Activated CD4-positive, alpha-beta memory T cell treated with anti-CD3 and anti-CD28 coated beads, Interleukin-2, amount 10 ng/mL, durations not matched to agents 7 days and 5 days (primary cell): ENCODE measurements at regions of chr11 and their contacts with region 1.

Region 1: GRCh38 chr11:47980245-47981049 is at the start of gene PTPRJ:
- DNase-seq: peak; percentile 60
- H3K4me3 Mint-ChIP-seq: peak within 1 kb of the TSS; percentile 99
- H3K27ac Mint-ChIP-seq: peak within 1 kb of the TSS; percentile 94
- H3K4me1 Mint-ChIP-seq: peaks cover 27% of the 10 kb centered on the region
- H3K27me3 Mint-ChIP-seq: peaks cover 15% of the 10 kb centered on the region
- total RNA-seq, gene PTPRJ: 83.0 to 89.1 TPM

Region 2: GRCh38 chr11:47800759-47801158 is 179.7 kb before region 1 on chr11:
- CTCF ChIA-PET with region 1: no interaction called
- POLR2A ChIA-PET with region 1: no interaction called
- DNase-seq: no peak
- H3K4me3 Mint-ChIP-seq: no peak overlapping the region
- H3K27ac Mint-ChIP-seq: peak overlapping the region; percentile 14
- H3K4me1 Mint-ChIP-seq: peaks cover 10% of the 10 kb centered on the region
- H3K27me3 Mint-ChIP-seq: no peaks in the 10 kb centered on the region

Region 3: GRCh38 chr11:47932544-47932943 is 47.9 kb before region 1 on chr11:
- CTCF ChIA-PET with region 1: interaction called, 13 read pairs
- POLR2A ChIA-PET with region 1: interaction called, 3 read pairs
- DNase-seq: no peak
- H3K4me3 Mint-ChIP-seq: no peak overlapping the region
- H3K27ac Mint-ChIP-seq: no peak overlapping the region
- H3K4me1 Mint-ChIP-seq: peaks cover 29% of the 10 kb centered on the region
- H3K27me3 Mint-ChIP-seq: no peaks in the 10 kb centered on the region

Region 4: GRCh38 chr11:47961383-47961782 is 19.1 kb before region 1 on chr11:
- CTCF ChIA-PET with region 1: no interaction called
- POLR2A ChIA-PET with region 1: no interaction called
- DNase-seq: no peak
- H3K4me3 Mint-ChIP-seq: no peak overlapping the region
- H3K27ac Mint-ChIP-seq: no peak overlapping the region
- H3K4me1 Mint-ChIP-seq: peaks cover 3% of the 10 kb centered on the region
- H3K27me3 Mint-ChIP-seq: no peaks in the 10 kb centered on the region

Region 5: DNA sequence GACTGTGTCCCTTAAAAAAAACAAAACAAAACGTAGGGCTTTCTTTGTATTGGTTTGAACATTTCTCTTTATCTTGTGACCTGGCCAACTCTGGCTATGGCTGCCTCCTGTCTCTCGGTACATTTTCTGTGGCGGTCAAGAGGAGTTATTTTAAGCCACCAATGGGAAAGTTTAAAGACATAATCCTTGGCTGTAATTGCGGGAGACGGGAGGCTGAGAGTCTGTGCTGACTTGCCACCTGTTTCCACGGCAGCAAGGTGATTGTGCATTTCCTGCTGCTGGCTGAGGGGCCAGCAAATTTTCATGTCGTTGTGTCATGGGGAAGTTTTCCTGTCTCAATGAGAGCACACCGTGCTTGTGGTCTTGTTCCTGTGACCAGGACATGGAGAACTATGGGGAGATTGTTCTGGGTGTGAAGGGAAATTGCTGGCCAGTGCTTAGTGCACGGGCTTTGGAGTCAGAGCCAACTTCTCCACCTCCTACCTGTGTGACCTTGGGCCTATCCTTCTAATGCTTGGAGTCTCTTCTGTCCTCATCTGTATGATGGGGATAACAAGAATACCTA is 10.9 kb after region 1 on chr11:
- CTCF ChIA-PET with region 1: interaction called, 10 read pairs
- POLR2A ChIA-PET with region 1: interaction called, 29 read pairs
- DNase-seq: no peak
- H3K4me3 Mint-ChIP-seq: peak overlapping the region; percentile 7
- H3K27ac Mint-ChIP-seq: peak overlapping the region; percentile 75
- H3K4me1 Mint-ChIP-seq: peaks cover 58% of the 10 kb centered on the region
- H3K27me3 Mint-ChIP-seq: no peaks in the 10 kb centered on the region

Region 6: GRCh38 chr11:48013269-48013901 is 32.9 kb after region 1 on chr11:
- CTCF ChIA-PET with region 1: interaction called, 10 read pairs
- POLR2A ChIA-PET with region 1: interaction called, 47 read pairs
- DNase-seq: peak; percentile 83
- H3K4me3 Mint-ChIP-seq: peak overlapping the region; percentile 69
- H3K27ac Mint-ChIP-seq: peak overlapping the region; percentile 99
- H3K4me1 Mint-ChIP-seq: peaks cover 91% of the 10 kb centered on the region
- H3K27me3 Mint-ChIP-seq: no peaks in the 10 kb centered on the region

Region 7: DNA sequence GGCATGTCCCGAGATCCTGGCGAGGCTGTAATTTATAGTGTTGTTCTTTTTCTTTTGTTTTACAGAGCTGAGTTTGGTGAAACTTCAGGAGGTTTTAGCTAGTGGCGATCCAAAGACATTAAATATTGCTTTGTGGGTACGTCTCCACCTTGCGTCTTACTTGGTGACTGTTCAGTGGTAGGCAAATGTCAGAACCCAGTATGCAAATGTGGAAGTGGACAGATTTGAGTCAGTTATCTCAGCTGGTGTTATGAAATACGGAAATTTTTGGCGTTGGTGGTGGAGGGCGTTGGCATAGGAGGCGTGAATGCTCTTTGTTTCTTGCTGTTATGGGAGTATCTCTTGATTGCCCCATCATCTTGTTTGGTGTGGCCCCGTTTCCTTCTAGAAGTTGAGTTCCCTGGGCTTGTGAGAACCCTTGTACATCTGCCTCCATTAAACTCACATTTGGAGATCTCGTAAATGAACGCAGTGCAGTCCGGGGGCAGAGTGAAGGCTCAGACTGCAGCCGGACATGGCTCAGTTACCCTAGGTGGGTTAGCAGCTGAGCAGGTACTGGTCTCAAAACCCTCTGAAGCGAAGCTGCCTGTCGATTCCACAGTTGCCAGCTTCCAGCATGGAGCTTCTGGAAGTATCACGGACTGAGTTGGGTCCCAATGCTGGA is 39.8 kb after region 1 on chr11:
- CTCF ChIA-PET with region 1: interaction called, 6 read pairs
- POLR2A ChIA-PET with region 1: interaction called, 38 read pairs
- DNase-seq: peak; percentile 72
- H3K4me3 Mint-ChIP-seq: peak overlapping the region; percentile 62
- H3K27ac Mint-ChIP-seq: peak overlapping the region; percentile 92
- H3K4me1 Mint-ChIP-seq: peaks cover 85% of the 10 kb centered on the region
- H3K27me3 Mint-ChIP-seq: no peaks in the 10 kb centered on the region

Region 8: DNA sequence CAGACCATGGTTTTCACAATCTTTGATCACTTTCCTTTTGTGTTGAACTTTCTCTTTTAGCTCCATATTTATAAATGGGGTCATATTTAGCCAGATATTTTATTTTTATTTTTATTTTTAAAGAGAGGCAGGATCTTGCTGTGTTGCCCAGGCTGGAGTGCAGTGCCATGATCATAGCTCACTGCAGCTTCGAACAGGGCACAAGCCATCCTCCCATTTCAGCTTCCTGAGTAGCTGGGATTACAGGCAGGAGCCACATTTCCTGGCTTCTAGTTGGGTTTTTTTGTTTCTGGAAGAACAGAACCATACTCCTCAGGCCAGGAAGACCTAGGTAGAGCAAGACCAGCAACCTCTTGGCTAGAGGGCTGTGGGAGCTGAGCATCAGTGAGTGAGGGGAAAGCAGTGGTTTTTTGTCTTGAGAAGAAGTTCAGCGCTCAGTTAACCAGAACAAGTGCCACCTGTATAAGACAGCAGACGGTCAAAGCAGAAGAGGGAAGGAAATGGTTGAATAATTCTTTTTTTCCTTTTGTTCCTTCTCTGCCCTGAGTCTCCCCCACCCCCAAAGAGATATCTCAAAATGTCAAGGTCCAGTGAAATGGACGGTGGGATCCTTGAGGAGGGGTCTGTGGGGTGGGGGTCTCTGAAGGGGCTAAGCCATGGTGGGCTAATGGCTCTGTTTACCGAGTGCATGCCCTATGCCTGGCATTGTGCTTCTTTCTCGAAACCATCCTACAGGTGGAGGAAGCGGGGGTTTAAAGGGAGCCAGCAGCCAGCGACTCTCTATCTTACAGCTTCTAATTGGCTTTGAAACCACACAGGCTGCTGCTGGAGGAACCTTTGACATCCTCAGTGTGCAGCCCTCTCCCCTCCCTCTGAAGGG is 62.9 kb after region 1 on chr11:
- CTCF ChIA-PET with region 1: no interaction called
- POLR2A ChIA-PET with region 1: no interaction called
- DNase-seq: no peak
- H3K4me3 Mint-ChIP-seq: no peak overlapping the region
- H3K27ac Mint-ChIP-seq: no peak overlapping the region
- H3K4me1 Mint-ChIP-seq: peaks cover 64% of the 10 kb centered on the region
- H3K27me3 Mint-ChIP-seq: no peaks in the 10 kb centered on the region

Region 9: GRCh38 chr11:48109046-48109666 is 128.7 kb after region 1 on chr11:
- CTCF ChIA-PET with region 1: interaction called, 15 read pairs
- POLR2A ChIA-PET with region 1: interaction called, 8 read pairs
- DNase-seq: no peak
- H3K4me3 Mint-ChIP-seq: peak overlapping the region; percentile 62
- H3K27ac Mint-ChIP-seq: peak overlapping the region; percentile 84
- H3K4me1 Mint-ChIP-seq: peaks cover 59% of the 10 kb centered on the region
- H3K27me3 Mint-ChIP-seq: no peaks in the 10 kb centered on the region